ENCODE measurements at regions of chr2 and their contacts with region 1.

Region 1: GRCh38 chr2:46812361-46813024 is 103.1 kb downstream of the MCFD2 start:
- DNase-seq: peak; percentile 84
- ATAC-seq: peak; percentile 50 to 70

Region 2: DNA sequence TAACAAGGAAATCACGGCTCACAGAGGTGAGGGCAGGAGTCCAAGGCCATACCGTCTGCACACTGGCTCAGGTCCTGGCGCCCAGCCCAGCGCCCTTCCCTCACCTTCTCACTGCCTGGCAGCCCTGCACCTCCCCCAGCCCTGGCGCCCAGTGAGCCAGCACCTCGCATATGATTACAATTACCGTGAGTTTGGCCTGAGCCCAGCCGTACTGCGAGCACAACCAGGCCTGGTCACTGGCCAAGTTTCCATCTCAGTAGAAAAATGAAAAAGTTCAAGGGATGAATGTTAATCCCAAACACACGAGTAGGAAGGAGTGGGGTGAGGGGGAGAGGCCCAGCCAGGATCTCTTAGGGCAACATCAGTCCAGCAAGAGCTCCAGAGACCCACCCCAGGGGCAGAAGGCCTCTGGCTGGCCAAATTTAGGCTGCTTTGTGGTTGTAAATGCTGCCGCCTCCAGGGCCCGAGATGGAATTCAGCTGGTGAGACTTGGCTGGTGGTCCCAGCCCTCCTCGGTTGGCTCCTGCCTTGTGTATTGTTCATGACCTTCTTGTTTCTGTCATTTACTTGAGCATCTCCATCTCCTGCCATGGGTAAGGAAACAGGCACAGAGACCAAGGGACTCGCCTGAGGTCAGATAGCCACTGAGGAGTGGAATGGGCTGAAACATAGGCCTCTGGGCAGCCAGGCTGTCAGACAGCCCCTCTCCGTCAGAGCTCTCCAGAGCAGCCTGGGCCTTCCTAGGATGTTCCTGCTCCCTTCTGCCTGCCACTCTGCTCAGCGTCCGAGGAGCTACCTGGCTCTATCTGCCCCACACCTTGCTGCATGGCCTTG is 35.0 kb after region 1 on chr2:
- intact Hi-C with region 1: loop called in 1 of 2 experiments (anchors 2 kb)
- DNase-seq: peak; percentile 96
- ATAC-seq: peak; percentile 68 to 72

Region 3: GRCh38 chr2:46866770-46867246 is 54.3 kb after region 1 on chr2:
- intact Hi-C with region 1: loop called in 1 of 2 experiments (anchors 10 kb)
- DNase-seq: peak; percentile 80
- ATAC-seq: peak; percentile 60 to 67

Region 4: DNA sequence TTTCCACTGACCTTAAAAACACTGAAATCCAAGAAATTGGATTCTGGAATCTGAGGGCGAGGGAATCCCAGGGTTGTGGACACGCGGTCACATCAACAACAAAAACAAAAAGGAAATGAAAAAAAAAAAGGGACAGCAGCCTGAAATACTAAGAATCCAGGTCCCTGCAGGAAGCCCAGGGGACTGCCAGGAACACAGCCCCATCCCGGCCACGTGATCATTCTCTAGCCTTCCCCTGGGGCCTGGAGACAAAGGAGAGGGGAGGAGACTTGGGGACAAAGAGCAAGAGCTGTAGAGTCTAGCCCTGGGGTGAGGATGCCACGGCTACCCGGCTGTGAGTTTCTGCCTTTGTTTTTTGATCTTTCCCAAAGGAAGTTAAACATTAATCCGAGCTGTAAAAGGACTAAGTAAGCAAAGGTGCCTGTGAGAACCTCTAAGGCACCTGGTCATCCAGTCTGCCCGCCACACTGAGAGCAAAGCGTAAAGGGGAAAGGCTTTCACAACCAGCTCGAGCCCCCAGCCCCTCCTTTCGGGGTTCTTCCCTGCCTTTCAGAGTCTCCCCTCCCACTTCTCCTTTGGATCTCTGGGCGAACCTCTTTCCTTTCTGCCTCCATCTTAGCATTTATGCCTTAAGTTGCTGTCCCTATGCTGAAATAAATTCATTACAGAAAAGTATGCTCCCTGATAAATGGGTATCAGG is 532.5 kb after region 1 on chr2:
- intact Hi-C with region 1: no loop called
- DNase-seq: peak; percentile 56
- ATAC-seq: peak; percentile 95 to 96